Dendritic cell treated with granulocyte-macrophage colony-stimulating factor and Interleukin-4, amounts not matched to agents 40 ng/mL and 50 ng/mL, for 4 days (primary cell): ENCODE measurements at regions of chr2 and their contacts with region 1.

Region 1: DNA sequence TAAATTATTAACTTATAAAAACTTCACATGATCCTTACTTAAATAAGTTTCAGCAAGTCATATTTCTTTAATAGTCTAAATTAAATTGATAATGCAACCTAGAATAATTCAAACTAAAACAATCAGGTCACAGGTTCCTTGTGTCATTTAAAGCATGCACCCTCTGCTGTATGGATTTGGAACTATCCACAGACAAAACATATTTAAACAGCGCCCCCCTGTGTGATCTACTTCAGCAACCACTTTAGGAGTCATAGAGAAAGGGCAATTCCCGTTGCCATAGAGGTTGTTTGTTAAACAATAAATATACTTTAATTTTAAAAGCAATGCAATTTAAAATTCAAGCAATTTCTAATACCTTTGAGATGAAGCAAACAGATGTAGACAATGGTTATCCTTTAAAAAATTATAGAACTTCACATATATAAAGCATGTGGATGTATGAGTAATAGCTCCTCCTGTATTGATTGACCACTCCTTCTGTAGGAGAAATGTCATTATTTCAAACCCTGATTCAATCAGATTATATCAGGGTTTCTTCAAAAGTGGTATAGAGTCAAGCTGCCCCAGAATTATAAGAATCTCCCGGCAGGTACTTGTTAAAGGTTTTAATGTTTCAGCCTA is 21.2 kb downstream of the GRB14 start:
- H3K4me3 Mint-ChIP-seq: no peak overlapping the region
- H3K27ac Mint-ChIP-seq: no peak overlapping the region
- H3K4me1 Mint-ChIP-seq: peaks cover 8% of the 10 kb centered on the region
- H3K27me3 Mint-ChIP-seq: no peaks in the 10 kb centered on the region

Region 2: GRCh38 chr2:163155279-163155883 is 1444.7 kb before region 1 on chr2:
- intact Hi-C with region 1: loop called (anchors 10 kb)
- H3K4me3 Mint-ChIP-seq: no peak overlapping the region
- H3K27ac Mint-ChIP-seq: no peak overlapping the region
- H3K4me1 Mint-ChIP-seq: no peaks in the 10 kb centered on the region
- H3K27me3 Mint-ChIP-seq: no peaks in the 10 kb centered on the region